Gastrocnemius medialis (tissue), 4 donors: ENCODE measurements at regions of chr2 and their contacts with region 1.

Region 1: DNA sequence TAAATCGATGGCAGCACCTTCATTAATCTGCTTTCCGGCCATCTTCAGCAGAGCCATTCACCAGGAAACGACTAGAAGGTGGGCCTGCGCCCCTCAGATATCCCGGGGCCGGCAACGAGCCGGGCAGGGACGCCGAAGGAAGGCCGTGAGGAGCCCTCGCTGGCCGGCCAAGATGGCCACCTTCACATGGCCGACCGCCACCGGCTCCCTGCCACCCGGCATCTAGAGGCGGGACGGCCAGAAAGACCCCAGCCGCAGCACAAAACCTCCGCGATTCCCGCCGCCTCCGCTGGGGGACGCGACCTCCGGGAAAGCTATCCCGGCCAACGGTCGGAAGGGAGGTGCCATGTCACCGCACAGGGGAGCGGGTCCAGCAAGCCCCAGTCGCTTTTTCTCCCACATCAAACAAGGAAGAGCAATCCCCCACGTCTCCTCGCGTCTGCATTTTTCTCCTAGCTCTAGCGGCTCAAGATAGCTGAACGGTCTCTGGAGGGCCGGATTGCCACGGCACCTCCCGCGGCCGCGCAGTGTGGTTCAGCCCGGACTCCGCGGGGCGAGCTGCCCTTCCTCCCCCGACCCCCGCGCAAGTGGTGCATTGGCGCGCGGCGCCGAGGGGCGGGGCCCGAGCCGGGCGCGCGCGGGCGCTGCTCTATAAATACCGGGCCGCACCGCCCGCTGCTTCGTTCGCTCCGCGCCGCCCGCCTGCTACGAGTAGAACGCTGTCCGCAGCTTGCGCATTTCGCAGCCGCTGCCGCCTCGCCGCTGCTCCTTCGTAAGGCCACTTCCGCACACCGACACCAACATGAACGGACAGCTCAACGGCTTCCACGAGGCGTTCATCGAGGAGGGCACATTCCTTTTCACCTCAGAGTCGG is at the start of gene MAT2A:
- DNase-seq: peak; percentile 89 to 94
- ATAC-seq: peak; percentile 74 to 76
- H3K4me3 ChIP-seq: peak within 1 kb of the TSS; percentile 74 to 90 (median 84)
- H3K27ac ChIP-seq: peak within 1 kb of the TSS; percentile 97 to 99 (median 98)
- H3K4me1 ChIP-seq: peaks cover 41 to 44% of the 10 kb centered on the region in 2 donors
- H3K27me3 ChIP-seq: no peaks in the 10 kb centered on the region
- CTCF ChIP-seq: peak; percentile 51 to 84 (median 77)
- POLR2A ChIP-seq: peak; percentile 100
- total RNA-seq, gene MAT2A: 33.2 to 131 (median 56.0) TPM

Region 2: GRCh38 chr2:85273738-85274731 is 264.7 kb before region 1 on chr2:
- in situ Hi-C with region 1: no loop called
- intact Hi-C with region 1: no loop called
- DNase-seq: no peak
- ATAC-seq: peak in 1 of 2 donors; percentile 27
- H3K4me3 ChIP-seq: no peak overlapping the region
- H3K27ac ChIP-seq: peak overlapping the region in 2 of 4 donors; percentile 18 to 44
- H3K4me1 ChIP-seq: peaks cover 13 to 19% of the 10 kb centered on the region in 2 donors
- H3K27me3 ChIP-seq: no peaks in the 10 kb centered on the region
- CTCF ChIP-seq: no peak
- POLR2A ChIP-seq: no peak

Region 3: DNA sequence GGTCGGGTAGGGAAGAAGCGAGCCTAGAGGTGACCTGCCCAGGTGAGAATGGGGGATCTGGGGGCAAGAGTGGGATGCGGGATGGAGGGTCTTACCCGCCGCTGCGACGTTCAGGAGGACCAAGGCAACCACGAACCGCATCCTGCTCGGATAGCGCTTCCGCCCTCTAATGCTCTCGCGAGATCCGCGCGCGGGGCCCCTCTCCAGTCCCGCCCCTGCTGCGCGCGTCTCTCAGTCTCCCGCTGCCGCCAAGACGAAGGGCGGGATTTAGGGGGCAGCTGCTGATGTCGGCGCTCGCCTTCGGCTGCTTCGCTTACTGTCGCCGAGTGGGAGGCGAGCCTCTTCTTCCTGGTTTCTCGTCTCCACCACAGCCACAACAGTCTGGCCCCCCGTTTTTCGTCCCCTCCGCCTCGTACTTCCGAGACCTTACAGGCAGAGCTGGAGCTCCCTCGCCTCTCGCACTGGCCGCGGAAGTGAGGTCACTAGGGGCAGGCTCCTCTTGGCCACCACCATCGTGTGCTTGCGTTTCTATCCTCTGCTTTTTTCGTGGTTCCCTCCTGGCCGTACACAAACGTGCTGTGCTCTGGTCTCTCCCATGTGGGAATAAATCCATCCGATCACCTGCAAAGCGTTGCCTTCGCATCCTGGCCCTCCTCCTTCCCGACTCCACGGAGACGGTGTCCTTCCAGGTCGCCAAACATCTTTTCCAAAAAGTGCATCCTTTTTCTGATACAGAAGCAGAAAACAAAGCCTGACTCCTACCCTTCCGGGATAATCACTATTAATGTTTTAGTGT is 210.7 kb before region 1 on chr2 and contains the start of gene TGOLN2:
- in situ Hi-C with region 1: no loop called
- intact Hi-C with region 1: no loop called
- DNase-seq: peak; percentile 80 to 87
- ATAC-seq: peak; percentile 96
- H3K4me3 ChIP-seq: peak within 1 kb of the TSS; percentile 74 to 99 (median 81)
- H3K27ac ChIP-seq: peak within 1 kb of the TSS; percentile 90 to 98 (median 94)
- H3K4me1 ChIP-seq: peaks cover 32 to 34% of the 10 kb centered on the region in 2 donors
- H3K27me3 ChIP-seq: no peaks in the 10 kb centered on the region
- CTCF ChIP-seq: peak in 2 of 5 experiments; percentile 21 to 25
- POLR2A ChIP-seq: peak; percentile 96 to 99
- total RNA-seq, gene TGOLN2: 29.5 to 81.7 (median 61.9) TPM

Region 4: DNA sequence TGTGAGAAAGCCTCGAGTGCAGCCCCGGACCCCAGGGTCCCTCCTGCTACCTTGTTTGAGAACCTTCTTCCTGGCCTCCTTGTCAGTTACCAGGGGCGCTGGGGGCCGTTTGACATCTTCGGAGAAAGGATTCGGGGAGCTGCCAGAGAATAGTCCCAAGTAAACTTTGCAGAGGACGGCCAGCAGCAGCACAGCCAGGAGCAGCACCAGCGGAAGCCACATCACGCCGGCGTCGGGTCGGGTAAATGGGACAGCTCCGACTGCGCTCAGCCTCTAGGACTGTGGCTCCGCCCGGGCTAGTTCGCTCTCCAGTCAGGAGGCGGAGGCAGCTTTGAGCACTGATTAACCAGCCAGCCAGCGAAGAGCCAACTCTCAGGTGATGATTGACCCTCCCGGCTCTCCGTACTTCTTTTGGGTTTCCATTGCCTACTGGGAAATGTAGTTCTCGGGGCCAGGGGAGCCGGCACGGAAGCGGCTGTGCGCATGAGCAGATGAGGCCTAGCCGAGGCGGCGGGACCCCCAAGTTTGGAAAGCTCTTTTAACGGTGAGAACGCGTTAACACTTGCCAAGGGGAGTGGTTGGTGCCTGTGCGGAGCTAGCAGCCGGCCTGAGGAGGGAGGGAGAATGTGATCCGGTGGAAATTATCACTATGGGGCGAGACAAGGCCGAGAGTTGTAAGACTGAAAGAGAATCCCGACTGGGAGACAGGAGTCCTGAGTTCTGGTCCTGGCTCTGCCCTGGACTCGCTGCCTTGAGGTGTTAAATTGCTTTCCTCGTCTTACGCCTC is 184.2 kb before region 1 on chr2 and contains the starts of genes ELMOD3 and RETSAT:
- in situ Hi-C with region 1: no loop called
- intact Hi-C with region 1: loop called (anchors 5 kb)
- DNase-seq: peak; percentile 99
- ATAC-seq: peak; percentile 90 to 94
- H3K4me3 ChIP-seq: peak within 1 kb of the TSS; percentile 70 to 97 (median 83)
- H3K27ac ChIP-seq: peak within 1 kb of the TSS; percentile 93 to 96 (median 96)
- H3K4me1 ChIP-seq: peaks cover 39 to 44% of the 10 kb centered on the region in 2 donors
- H3K27me3 ChIP-seq: no peaks in the 10 kb centered on the region
- CTCF ChIP-seq: no peak
- POLR2A ChIP-seq: peak; percentile 97
- total RNA-seq, gene ELMOD3: 15.9 to 31.7 (median 25.0) TPM
- total RNA-seq, gene RETSAT: 62.2 to 151 (median 116) TPM

Region 5: DNA sequence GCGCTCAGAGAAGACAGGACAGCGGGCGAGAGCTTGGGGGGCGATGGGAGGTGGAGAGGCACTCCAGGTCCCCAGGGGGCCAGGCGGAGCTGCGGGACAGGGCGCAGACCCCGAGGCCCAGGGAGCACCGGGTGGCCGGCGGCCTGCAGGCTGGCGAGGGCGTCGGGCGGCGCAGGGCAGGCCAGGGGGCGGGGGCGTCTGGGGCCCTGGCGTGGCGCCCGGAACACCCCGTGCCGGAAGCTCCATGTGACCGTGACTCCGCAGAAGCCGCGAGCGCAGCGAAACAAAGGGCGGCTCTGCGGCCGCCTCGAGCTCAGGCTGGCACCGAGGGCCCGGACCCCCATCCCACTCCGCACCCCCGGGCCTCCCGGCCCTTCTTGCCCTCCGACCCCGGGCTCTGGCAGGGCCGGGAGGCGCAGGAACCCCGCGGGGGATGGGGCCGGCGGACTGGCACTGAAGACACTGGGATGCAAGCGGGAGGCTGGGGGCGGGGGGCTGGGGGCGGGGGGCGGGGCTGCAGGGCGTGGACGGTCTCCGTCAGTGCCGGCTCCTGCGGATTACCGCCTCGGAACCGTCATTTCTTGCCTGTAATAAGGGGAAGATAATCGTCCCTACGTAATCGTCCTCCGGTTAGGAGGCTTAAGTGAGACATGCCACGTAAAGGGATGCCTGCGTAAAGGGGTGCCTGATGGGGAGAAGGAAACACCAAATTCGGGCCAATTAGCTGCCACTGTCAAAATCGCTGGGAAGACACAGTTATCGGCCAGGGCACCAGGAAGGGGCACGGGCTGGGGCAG is 101.0 kb before region 1 on chr2:
- in situ Hi-C with region 1: no loop called
- intact Hi-C with region 1: loop called (anchors 1 kb)
- DNase-seq: peak; percentile 77 to 85
- ATAC-seq: peak; percentile 55 to 60
- H3K4me3 ChIP-seq: peak overlapping the region; percentile 38 to 54 (median 51)
- H3K27ac ChIP-seq: peak overlapping the region; percentile 85 to 98 (median 96)
- H3K4me1 ChIP-seq: peaks cover 25 to 52% of the 10 kb centered on the region in 2 donors
- H3K27me3 ChIP-seq: no peaks in the 10 kb centered on the region
- CTCF ChIP-seq: peak in 1 of 5 experiments; percentile 19
- POLR2A ChIP-seq: peak; percentile 82 to 92

Region 6: DNA sequence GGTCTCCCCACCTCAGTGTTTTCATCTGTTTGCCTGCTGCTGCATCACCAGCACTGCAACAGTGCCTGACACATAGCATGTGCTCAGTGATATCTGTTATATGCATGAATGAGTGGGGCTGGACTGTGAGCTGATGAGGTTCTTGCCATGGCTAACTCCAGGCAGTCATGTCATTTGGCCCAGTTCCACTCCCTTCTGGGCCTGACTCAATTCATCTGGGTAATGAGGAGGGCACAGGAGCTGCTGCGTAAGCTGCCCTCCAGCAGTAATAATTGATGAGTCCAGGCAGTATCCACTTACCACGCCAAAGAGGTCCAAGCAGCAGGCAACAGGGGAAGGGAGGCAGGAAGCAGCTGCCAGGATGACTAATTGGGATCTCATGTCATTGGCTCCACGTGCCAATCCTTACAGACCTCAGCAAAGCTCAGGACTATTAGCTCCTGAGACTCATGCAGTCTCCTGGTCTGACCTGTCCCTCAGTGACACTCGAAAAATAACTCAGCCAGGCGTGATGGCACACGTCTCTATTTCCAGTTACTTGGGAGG is 33.9 kb before region 1 on chr2:
- in situ Hi-C with region 1: no loop called
- intact Hi-C with region 1: loop called (anchors 1 kb)
- DNase-seq: peak; percentile 89 to 92
- ATAC-seq: peak; percentile 94 to 95
- H3K4me3 ChIP-seq: no peak overlapping the region
- H3K27ac ChIP-seq: peak overlapping the region; percentile 74 to 90 (median 81)
- H3K4me1 ChIP-seq: peaks cover 19 to 34% of the 10 kb centered on the region in 2 donors
- H3K27me3 ChIP-seq: no peaks in the 10 kb centered on the region
- CTCF ChIP-seq: no peak
- POLR2A ChIP-seq: no peak

Region 7: GRCh38 chr2:85602476-85603234 is 63.9 kb after region 1 on chr2 and contains the start of gene TMEM150A:
- in situ Hi-C with region 1: no loop called
- intact Hi-C with region 1: loop called (anchors 2 kb)
- DNase-seq: peak; percentile 92 to 95
- ATAC-seq: peak; percentile 51 to 60
- H3K4me3 ChIP-seq: peak within 1 kb of the TSS; percentile 74 to 84 (median 84)
- H3K27ac ChIP-seq: peak within 1 kb of the TSS; percentile 93 to 99 (median 94)
- H3K4me1 ChIP-seq: peaks cover 58 to 60% of the 10 kb centered on the region in 2 donors
- H3K27me3 ChIP-seq: no peaks in the 10 kb centered on the region
- CTCF ChIP-seq: peak in 4 of 5 experiments; percentile 68 to 75 (median 71)
- POLR2A ChIP-seq: peak; percentile 98 to 99
- total RNA-seq, gene TMEM150A: 44.4 to 102 (median 80.7) TPM

Region 8: DNA sequence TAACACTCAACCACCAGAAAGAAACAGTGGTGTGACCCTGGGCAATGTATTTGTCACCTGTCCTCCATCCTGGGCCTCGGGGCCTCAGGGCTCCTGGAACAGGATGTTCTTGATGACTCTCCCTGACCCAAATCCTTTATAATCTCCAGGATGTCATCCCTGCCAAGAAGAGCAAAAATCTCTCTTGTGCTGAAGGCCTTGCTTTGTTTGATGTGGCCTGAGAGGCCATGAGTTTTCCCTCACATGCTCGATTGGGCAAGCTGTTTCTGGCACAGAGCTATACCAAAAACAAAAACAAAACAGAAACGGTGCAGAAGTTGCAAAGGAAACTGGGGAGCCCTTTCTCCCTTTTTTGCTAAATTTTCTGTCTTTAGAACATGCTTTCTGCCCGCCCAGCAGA is 385.8 kb after region 1 on chr2:
- in situ Hi-C with region 1: no loop called
- intact Hi-C with region 1: no loop called
- DNase-seq: peak; percentile 53 to 69
- ATAC-seq: peak; percentile 88 to 91
- H3K4me3 ChIP-seq: no peak overlapping the region
- H3K27ac ChIP-seq: peak overlapping the region; percentile 70 to 78 (median 74)
- H3K4me1 ChIP-seq: peaks cover 20 to 23% of the 10 kb centered on the region in 2 donors
- H3K27me3 ChIP-seq: no peaks in the 10 kb centered on the region
- CTCF ChIP-seq: no peak
- POLR2A ChIP-seq: no peak